T-cell (primary cell): ENCODE measurements at regions of chr9 and their contacts with region 1.

Region 1: DNA sequence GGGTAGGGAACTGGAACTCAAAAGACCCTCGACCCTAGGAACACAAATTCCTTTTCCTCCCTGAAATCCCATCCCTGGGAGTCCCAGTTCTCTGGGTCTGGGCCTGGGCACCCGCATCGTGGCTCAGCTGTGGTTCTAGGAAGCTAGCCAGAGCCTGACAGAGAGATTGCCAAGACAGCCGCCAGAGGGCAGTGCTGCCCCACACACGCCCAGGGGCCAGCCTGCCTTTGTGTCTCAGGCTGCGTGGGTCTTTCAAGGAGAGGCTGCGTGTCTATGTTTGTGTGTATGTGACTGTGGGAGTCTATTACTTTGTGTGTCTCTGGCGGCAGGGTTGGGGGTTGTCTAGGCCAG is 32.0 kb upstream of the TTLL11 start:
- DNase-seq: peak; percentile 45 to 85 (median 72)
- ATAC-seq: peak; percentile 73 to 86 (median 77)
- H3K4me3 ChIP-seq: no peak overlapping the region
- H3K4me3 Mint-ChIP-seq: peak overlapping the region; percentile 35 to 62 (median 40)
- H3K27ac ChIP-seq: no peak overlapping the region
- H3K27ac Mint-ChIP-seq: no peak overlapping the region
- H3K4me1 ChIP-seq: peaks cover 0 to 44% of the 10 kb centered on the region in 2 experiments
- H3K4me1 Mint-ChIP-seq: peaks cover 15 to 45% (median 19%) of the 10 kb centered on the region in 3 donors
- H3K27me3 ChIP-seq: peaks cover 0 to 77% of the 10 kb centered on the region in 2 experiments
- H3K27me3 Mint-ChIP-seq: peaks cover 22 to 28% of the 10 kb centered on the region in 2 donors

Region 2: GRCh38 chr9:122099271-122099869 is 25.8 kb before region 1 on chr9:
- CTCF ChIA-PET with region 1: interaction called, 11 to 27 read pairs
- POLR2A ChIA-PET with region 1: no interaction called
- DNase-seq: peak; percentile 44 to 88 (median 73)
- ATAC-seq: peak; percentile 76 to 92 (median 84)
- H3K4me3 ChIP-seq: no peak overlapping the region
- H3K4me3 Mint-ChIP-seq: peak overlapping the region in 2 of 3 donors; percentile 22 to 34
- H3K27ac ChIP-seq: no peak overlapping the region
- H3K27ac Mint-ChIP-seq: no peak overlapping the region
- H3K4me1 ChIP-seq: peaks cover 0 to 12% of the 10 kb centered on the region in 2 experiments
- H3K4me1 Mint-ChIP-seq: peaks cover 13 to 16% (median 14%) of the 10 kb centered on the region in 3 donors
- H3K27me3 ChIP-seq: peaks cover 2 to 22% of the 10 kb centered on the region in 2 experiments
- H3K27me3 Mint-ChIP-seq: peaks cover 9 to 10% of the 10 kb centered on the region in 2 donors

Region 3: DNA sequence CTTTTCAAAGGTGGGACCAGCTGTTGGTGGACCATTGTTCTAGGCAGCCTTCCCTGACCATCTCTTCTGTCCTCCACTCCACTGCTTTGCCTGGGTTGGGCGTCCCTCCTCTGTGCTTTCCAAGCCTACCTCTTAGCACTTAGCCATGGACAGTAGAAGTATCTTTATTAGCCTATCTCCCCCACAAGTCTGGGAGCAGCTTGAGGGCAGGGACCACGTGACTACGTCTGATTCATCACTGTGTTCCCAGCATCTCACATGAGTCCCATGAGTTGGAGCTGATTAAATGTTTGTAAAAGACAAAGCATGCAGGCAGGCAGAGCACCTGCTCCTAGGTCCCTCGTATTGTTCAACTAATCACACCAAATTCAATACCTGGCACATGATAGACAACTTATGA is 55.5 kb after region 1 on chr9:
- CTCF ChIA-PET with region 1: no interaction called
- POLR2A ChIA-PET with region 1: no interaction called
- DNase-seq: no peak
- ATAC-seq: no peak
- H3K4me3 ChIP-seq: no peak overlapping the region
- H3K4me3 Mint-ChIP-seq: no peak overlapping the region
- H3K27ac ChIP-seq: no peak overlapping the region
- H3K27ac Mint-ChIP-seq: no peak overlapping the region
- H3K4me1 ChIP-seq: no peaks in the 10 kb centered on the region
- H3K4me1 Mint-ChIP-seq: no peaks in the 10 kb centered on the region
- H3K27me3 ChIP-seq: peaks cover 0 to 4% of the 10 kb centered on the region in 2 experiments
- H3K27me3 Mint-ChIP-seq: peaks cover 10 to 16% of the 10 kb centered on the region in 2 donors